ENCODE measurements at regions of chr15 and their contacts with region 1.

Region 1: GRCh38 chr15:65184868-65185738 is at the start of gene CLPX:
- DNase-seq: peak; percentile 95
- H3K4me3 ChIP-seq: peak within 1 kb of the TSS; percentile 90 to 91
- H3K27ac ChIP-seq: peak within 1 kb of the TSS; percentile 92 to 97
- H3K4me1 ChIP-seq: peaks cover 9% of the 10 kb centered on the region
- H3K27me3 ChIP-seq: no peaks in the 10 kb centered on the region
- CTCF ChIP-seq: peak in 1 of 3 experiments; percentile 12
- POLR2A ChIP-seq: no peak
- total RNA-seq, gene CLPX: 60.4 to 89.4 TPM

Region 2: GRCh38 chr15:64180235-64180837 is 1004.8 kb before region 1 on chr15:
- intact Hi-C with region 1: no loop called
- DNase-seq: no peak
- H3K4me3 ChIP-seq: no peak overlapping the region
- H3K27ac ChIP-seq: no peak overlapping the region
- H3K4me1 ChIP-seq: peaks cover 4% of the 10 kb centered on the region
- H3K27me3 ChIP-seq: no peaks in the 10 kb centered on the region
- CTCF ChIP-seq: no peak
- POLR2A ChIP-seq: no peak

Region 3: DNA sequence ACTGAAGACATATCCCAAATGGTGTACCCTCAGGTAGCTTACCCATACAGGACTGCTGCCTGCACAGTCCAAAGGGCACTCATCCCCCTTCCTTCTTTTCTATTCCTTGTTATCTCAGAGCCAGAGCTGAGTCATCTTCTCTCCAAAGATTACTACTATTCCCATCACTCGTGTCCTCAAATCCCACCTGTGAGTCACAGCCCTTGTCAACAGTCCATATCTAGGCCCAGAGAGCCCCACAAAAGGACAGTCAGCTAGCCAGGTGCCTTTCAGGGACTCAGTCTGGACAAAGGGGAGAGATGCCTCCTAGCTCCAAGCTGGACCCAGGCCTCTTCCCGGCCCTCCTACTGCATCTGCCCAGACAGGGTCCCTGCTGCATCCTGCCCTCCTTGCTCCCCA is 90.6 kb after region 1 on chr15:
- intact Hi-C with region 1: loop called (anchors 5 kb)
- DNase-seq: no peak
- H3K4me3 ChIP-seq: no peak overlapping the region
- H3K27ac ChIP-seq: no peak overlapping the region
- H3K4me1 ChIP-seq: peaks cover 6% of the 10 kb centered on the region
- H3K27me3 ChIP-seq: no peaks in the 10 kb centered on the region
- CTCF ChIP-seq: no peak
- POLR2A ChIP-seq: no peak

Measured in testis (tissue), 5 donors.